Activated CD4-positive, alpha-beta T cell treated with anti-CD3 and anti-CD28 coated beads for 36 hours (primary cell): ENCODE measurements at regions of chr18 and their contacts with region 1.

Region 1: GRCh38 chr18:54852780-54853675 is 24.8 kb downstream of the RAB27B start:
- DNase-seq: peak; percentile 29
- ATAC-seq: peak; percentile 80
- H3K4me3 Mint-ChIP-seq: peak overlapping the region; percentile 49
- H3K27ac Mint-ChIP-seq: peak overlapping the region; percentile 3
- H3K4me1 Mint-ChIP-seq: peaks cover 17% of the 10 kb centered on the region
- H3K27me3 Mint-ChIP-seq: no peaks in the 10 kb centered on the region

Region 2: DNA sequence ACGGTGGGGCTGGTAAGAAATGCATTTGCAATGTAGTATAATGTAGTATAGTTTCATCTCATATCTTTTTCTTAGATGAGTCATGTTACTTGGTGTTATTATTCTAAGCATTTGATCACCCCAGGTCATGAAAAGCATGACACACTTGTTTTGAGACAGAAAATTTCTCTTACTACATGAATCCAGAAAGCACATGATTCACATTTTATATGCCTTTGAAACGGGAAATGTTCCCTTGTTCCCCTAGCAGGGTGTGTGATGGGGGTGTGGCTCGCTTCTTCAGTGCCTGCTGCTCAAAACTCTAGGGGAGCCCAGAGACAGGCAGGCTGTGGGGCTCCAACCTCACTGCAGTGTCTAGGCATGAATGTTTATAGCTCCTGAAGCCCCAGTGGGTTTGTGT is 140.7 kb before region 1 on chr18:
- CTCF ChIA-PET with region 1: no interaction called
- POLR2A ChIA-PET with region 1: no interaction called
- intact Hi-C with region 1: loop called in 1 of 2 experiments (anchors 1 kb)
- DNase-seq: peak; percentile 57
- ATAC-seq: peak; percentile 82
- H3K4me3 Mint-ChIP-seq: no peak overlapping the region
- H3K27ac Mint-ChIP-seq: no peak overlapping the region
- H3K4me1 Mint-ChIP-seq: peaks cover 35% of the 10 kb centered on the region
- H3K27me3 Mint-ChIP-seq: peaks cover 4% of the 10 kb centered on the region

Region 3: GRCh38 chr18:54835944-54836343 is 17.1 kb before region 1 on chr18:
- CTCF ChIA-PET with region 1: interaction called, 3 read pairs
- POLR2A ChIA-PET with region 1: no interaction called
- intact Hi-C with region 1: loop called in 1 of 2 experiments (anchors 2 kb)
- DNase-seq: no peak
- ATAC-seq: peak; percentile 57
- H3K4me3 Mint-ChIP-seq: peak overlapping the region; percentile 13
- H3K27ac Mint-ChIP-seq: peak overlapping the region; percentile 28
- H3K4me1 Mint-ChIP-seq: peaks cover 29% of the 10 kb centered on the region
- H3K27me3 Mint-ChIP-seq: peaks cover 2% of the 10 kb centered on the region